HEK293T (cell line): ENCODE measurements at regions of chr2 and their contacts with region 1.

Region 1: DNA sequence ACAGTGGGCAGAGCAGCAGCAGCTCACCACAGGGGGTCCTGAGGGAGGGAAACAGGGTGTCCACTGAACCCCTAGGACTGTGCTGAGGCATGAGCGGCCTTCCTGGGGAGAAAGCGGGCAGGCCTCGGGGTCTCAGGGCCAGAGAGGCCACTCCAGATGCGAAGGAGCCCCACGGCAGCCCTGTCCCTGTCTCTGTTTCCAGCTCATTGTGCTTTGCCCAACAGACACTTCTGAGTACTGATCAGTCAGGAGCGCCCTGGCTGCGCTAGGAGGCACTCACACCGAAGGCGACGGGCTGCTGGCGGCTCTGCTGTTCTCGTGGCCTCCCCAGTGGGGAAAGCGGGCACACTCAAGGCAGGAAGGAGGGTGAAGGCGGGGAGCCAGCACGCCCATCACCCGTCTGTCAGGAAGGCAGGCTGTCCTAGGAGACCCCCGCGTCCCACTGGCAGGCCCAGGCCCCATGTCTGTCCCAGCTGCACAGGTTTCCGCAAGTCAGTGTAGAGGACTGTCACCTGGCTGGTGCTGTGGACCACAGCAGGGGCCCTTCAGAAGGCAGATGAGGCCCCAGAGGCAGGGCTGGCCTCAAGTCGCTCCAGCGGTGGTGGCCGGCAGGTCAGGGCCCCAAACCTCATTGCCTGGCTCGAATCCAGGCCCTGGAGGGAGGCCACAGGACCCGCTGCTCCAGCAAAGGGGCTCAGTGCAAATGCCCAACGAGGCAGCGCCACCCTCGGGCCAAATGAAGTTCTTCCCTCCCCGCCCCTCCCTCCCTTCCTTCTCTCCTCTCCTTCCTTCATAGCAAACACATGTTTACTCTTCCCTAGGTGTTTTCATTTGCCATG is 6.8 kb downstream of the ESPNL start:
- DNase-seq: peak; percentile 48

Region 2: GRCh38 chr2:238146884-238147544 is 40.1 kb after region 1 on chr2:
- CTCF ChIA-PET with region 1: interaction called, 10 read pairs
- POLR2A ChIA-PET with region 1: no interaction called
- DNase-seq: no peak